ENCODE measurements at regions of chrX and their contacts with region 1.

Region 1: DNA sequence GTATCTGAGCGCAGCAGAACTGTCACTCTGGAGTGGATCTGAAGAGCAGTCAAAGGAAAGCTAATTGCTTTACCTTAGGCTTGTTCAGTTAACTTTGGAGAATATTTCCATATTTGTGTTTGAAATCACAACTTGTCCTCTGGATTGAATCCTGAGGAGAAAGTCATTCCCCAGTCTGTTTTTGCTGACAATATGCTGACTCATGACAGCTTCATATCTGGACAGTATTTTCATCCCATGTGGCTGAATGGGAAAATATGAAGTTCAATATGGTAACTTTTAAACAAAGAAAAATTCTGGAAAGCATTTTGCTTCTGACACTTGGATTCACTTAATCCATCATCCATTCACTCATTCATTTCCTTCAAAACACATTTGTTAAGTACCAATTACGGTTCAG is 46.3 kb upstream of the MAGEC3 start:
- DNase-seq: no peak
- ATAC-seq: no peak
- H3K4me3 ChIP-seq: no peak overlapping the region
- H3K27ac ChIP-seq: no peak overlapping the region; the same call in 1 of the 2 replicates
- H3K4me1 ChIP-seq: no peaks in the 10 kb centered on the region
- H3K27me3 ChIP-seq: no peaks in the 10 kb centered on the region
- CTCF ChIP-seq: no peak

Region 2: GRCh38 chrX:142134533-142134932 is 342.7 kb after region 1 on chrX:
- CTCF ChIA-PET with region 1: no interaction called
- POLR2A ChIA-PET with region 1: interaction called, 15 read pairs
- in situ Hi-C with region 1: no loop called
- intact Hi-C with region 1: no loop called
- DNase-seq: no peak
- ATAC-seq: no peak
- H3K4me3 ChIP-seq: no peak overlapping the region
- H3K27ac ChIP-seq: no peak overlapping the region
- H3K4me1 ChIP-seq: no peaks in the 10 kb centered on the region
- H3K27me3 ChIP-seq: no peaks in the 10 kb centered on the region
- CTCF ChIP-seq: no peak

Measured in Panc1 (cell line).